Stomach (tissue), 19 donors: ENCODE measurements at regions of chr10 and their contacts with region 1.

Region 1: DNA sequence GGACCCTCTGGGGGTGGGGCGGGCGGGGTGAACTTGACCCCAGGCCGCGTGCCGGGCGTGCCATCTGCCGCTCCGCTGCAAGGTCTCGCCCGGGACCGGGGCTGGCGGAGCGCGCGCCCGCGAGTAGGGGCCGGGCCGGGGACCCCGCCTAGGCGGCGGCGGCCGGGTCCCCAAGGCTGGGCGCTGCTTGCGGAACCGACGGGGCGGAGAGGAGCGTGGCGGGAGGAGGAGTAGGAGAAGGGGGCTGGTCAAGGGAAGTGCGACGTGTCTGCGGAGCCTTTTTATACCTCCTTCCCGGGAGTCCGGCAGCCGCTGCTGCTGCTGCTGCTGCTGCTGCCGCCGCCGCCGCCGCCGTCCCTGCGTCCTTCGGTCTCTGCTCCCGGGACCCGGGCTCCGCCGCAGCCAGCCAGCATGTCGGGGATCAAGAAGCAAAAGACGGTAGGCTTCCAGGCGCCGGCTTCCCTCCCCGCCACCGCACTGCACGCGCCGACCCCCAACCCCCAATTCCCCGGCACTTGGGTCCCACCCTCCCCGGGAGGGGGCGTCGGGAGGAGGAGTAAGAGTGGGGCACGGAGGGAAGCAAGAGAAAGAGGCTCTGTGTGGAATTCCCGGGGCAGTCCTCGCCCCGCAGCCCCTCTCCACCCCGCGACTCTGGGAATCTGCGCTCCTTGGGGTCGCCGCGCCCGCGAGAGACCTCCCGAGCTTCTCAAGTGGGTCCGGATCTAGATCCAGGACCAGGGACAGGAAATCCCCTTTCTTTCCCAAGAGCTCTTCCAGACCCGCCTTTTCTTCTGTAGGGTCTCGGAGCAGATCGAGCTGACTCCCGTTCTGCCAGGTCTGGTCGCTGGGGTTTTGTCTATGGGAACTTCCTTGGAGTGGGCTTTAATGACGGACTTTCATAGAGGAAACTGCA is at the start of gene PAPSS2:
- DNase-seq: peak; percentile 53 to 86
- H3K4me3 ChIP-seq: peak within 1 kb of the TSS; percentile 62 to 79 (median 73)
- H3K27ac ChIP-seq: peak within 1 kb of the TSS; percentile 59 to 86 (median 79)
- H3K4me1 ChIP-seq: peaks cover 5 to 49% (median 24%) of the 10 kb centered on the region in 4 donors
- H3K27me3 ChIP-seq: no peaks in the 10 kb centered on the region
- CTCF ChIP-seq: no peak
- EP300 ChIP-seq: no peak
- POLR2A ChIP-seq: no peak
- total RNA-seq, gene PAPSS2: 1.3 to 17.3 (median 12.6) TPM

Region 2: DNA sequence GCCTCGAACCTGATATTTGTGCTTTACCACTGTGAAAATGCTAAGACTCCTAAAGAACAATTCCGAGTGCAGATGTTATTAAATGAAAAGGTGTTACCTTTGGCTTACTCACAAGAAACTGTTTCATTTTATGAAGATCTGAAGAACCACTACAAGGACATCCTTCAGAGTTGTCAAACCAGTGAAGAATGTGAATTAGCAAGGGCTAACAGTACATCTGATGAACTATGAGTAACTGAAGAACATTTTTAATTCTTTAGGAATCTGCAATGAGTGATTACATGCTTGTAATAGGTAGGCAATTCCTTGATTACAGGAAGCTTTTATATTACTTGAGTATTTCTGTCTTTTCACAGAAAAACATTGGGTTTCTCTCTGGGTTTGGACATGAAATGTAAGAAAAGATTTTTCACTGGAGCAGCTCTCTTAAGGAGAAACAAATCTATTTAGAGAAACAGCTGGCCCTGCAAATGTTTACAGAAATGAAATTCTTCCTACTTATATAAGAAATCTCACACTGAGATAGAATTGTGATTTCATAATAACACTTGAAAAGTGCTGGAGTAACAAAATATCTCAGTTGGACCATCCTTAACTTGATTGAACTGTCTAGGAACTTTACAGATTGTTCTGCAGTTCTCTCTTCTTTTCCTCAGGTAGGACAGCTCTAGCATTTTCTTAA is 107.4 kb before region 1 on chr10:
- intact Hi-C with region 1: no loop called
- DNase-seq: no peak
- H3K4me3 ChIP-seq: no peak overlapping the region
- H3K27ac ChIP-seq: no peak overlapping the region
- H3K4me1 ChIP-seq: peaks cover 0 to 5% (median 0%) of the 10 kb centered on the region in 4 donors
- H3K27me3 ChIP-seq: no peaks in the 10 kb centered on the region
- CTCF ChIP-seq: no peak
- EP300 ChIP-seq: no peak
- POLR2A ChIP-seq: no peak

Region 3: GRCh38 chr10:87729940-87730575 is 70.2 kb after region 1 on chr10:
- intact Hi-C with region 1: loop called (anchors 5 kb)
- DNase-seq: no peak
- H3K4me3 ChIP-seq: no peak overlapping the region
- H3K27ac ChIP-seq: no peak overlapping the region
- H3K4me1 ChIP-seq: peaks cover 0 to 11% (median 4%) of the 10 kb centered on the region in 4 donors
- H3K27me3 ChIP-seq: no peaks in the 10 kb centered on the region
- CTCF ChIP-seq: no peak
- EP300 ChIP-seq: no peak
- POLR2A ChIP-seq: no peak

Region 4: DNA sequence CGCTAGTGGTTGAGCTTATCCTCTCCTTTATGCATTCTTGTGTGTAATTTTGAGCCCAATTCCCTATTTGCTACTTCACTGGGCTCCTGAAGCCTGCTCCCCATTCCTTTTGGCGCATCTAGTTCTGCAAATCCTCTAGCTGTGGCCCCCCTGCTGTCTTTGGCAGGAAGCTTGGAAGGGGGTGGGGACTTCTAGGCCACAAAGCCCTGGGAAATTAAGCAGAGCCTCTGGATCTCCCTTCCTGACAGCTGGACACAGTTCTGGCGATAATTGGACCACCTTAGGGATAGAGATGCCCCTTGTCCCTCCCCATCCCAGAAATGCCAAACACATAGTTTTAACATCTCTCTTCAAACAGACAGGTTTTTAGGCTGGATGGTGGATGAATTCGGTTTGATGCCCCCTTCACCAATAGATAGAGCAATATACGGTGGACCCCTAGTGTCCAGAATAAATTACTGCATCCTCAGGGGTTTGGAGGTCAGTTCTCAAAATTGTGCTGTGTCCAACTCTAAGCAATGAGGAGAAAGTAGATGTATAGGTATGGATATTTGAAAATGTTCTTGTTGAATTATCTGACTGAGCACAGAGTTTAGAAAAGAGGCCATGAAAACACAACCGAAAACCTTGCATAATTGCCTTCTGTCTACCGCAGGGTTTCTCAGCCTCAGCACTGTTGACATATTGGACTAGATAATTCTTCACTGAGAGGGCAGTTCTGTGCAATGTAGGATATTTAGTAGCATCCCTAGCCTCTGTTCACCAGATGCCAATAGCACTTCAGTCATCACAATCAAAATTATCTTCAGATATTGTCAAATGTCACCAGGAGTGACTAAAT is 75.4 kb after region 1 on chr10:
- intact Hi-C with region 1: loop called (anchors 5 kb)
- DNase-seq: peak in 1 of 2 donors; percentile 72
- H3K4me3 ChIP-seq: no peak overlapping the region
- H3K27ac ChIP-seq: peak overlapping the region in 1 of 5 donors; percentile 8
- H3K4me1 ChIP-seq: peaks cover 0 to 9% (median 7%) of the 10 kb centered on the region in 4 donors
- H3K27me3 ChIP-seq: no peaks in the 10 kb centered on the region
- CTCF ChIP-seq: peak in 5 of 7 experiments; percentile 64 to 84 (median 71)
- EP300 ChIP-seq: no peak
- POLR2A ChIP-seq: no peak